ENCODE measurements at regions of chr17 and their contacts with region 1.

Region 1: DNA sequence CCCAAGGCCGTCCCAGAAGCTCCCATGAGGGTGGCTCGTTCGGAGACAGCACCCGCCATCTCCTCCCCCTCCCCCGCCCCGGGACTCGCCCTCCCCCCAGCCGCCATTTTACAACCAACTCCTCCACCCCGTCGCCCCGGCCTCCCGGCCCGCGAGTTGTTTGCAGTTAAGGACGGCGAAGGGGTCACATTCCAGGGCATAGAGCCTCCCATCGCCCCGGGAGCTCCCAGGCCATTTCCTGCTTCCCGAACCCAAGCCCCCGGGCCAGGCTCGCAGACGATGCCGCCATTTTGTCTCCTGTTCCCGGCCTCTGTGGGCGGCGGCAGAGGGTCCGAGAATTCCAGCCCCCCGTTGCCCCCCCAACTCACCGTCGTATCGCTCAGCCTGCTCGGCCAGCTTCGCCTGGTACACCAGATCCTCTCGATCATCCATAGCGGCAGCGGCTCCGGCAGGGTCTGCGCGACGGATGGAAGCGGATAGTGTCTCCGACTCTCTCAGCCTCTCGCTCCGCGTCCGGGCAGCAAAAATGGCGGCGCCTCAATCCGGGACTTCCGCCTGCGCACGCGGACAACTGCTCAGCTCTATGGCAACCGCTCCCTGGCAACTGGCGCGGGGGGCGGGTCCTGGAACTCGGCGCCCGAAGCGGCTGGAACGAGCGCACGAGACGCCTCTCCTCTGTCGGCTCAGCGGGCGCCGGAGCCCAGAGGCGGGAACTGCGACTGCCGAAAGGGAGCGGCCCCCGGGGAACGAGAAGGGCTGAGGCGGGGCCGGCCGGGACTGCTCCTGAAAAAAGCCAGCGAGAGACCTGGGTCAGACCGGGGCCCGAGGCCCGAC is at the start of gene YWHAE:
- DNase-seq: peak; percentile 98
- H3K4me3 ChIP-seq: peak within 1 kb of the TSS; percentile 88 to 99
- H3K27ac ChIP-seq: peak within 1 kb of the TSS; percentile 99 to 100
- H3K4me1 ChIP-seq: peaks cover 28% of the 10 kb centered on the region
- H3K27me3 ChIP-seq: no peaks in the 10 kb centered on the region
- CTCF ChIP-seq: no peak
- POLR2A ChIP-seq: peak; percentile 68
- total RNA-seq, gene YWHAE: 678 to 749 TPM

Region 2: DNA sequence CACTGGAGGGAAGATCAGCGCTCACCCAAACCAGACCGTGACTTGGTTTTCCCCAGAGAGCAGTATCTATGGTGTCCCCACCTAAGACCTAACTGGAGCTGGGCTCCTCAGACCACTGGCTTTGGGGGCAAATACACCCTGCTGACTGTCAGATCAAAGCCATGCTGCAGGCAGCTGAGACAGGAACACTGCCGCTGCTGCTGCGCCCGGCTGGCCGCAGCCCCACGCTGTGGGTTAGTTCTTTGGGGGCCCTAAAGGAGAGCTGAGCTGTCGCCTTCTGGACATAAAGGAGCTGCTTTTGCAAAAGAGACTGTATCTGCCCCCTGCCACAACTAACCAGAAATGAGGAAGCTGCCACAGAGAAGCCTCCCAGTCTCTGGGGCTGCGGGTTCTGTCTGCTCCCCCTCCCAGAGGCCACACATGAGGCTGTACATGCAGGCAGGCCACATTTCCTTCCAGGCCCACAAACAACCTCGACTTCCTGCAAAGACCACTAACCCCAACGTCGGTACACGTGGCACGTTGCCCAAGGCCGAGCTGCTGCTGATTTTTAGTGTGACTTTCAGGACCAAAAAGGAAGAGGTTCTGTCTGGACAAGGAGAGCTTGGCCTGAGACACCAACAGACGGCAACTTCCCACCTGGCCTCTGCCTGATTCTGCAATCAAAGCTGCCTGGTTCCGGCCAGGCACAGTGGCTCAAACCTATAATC is 202.0 kb before region 1 on chr17:
- intact Hi-C with region 1: no loop called
- DNase-seq: peak; percentile 88
- H3K4me3 ChIP-seq: no peak overlapping the region
- H3K27ac ChIP-seq: peak overlapping the region; percentile 55 to 71
- H3K4me1 ChIP-seq: peaks cover 18% of the 10 kb centered on the region
- H3K27me3 ChIP-seq: no peaks in the 10 kb centered on the region
- CTCF ChIP-seq: no peak
- POLR2A ChIP-seq: no peak

Region 3: GRCh38 chr17:1275962-1276736 is 123.7 kb before region 1 on chr17:
- intact Hi-C with region 1: no loop called
- DNase-seq: peak; percentile 75
- H3K4me3 ChIP-seq: no peak overlapping the region
- H3K27ac ChIP-seq: no peak overlapping the region
- H3K4me1 ChIP-seq: no peaks in the 10 kb centered on the region
- H3K27me3 ChIP-seq: no peaks in the 10 kb centered on the region
- CTCF ChIP-seq: peak; percentile 60 to 85 (median 75)
- POLR2A ChIP-seq: no peak

Region 4: GRCh38 chr17:1331708-1332107 is 68.2 kb before region 1 on chr17:
- intact Hi-C with region 1: no loop called
- DNase-seq: no peak
- H3K4me3 ChIP-seq: no peak overlapping the region
- H3K27ac ChIP-seq: no peak overlapping the region
- H3K4me1 ChIP-seq: no peaks in the 10 kb centered on the region
- H3K27me3 ChIP-seq: no peaks in the 10 kb centered on the region
- CTCF ChIP-seq: no peak
- POLR2A ChIP-seq: no peak

Region 5: DNA sequence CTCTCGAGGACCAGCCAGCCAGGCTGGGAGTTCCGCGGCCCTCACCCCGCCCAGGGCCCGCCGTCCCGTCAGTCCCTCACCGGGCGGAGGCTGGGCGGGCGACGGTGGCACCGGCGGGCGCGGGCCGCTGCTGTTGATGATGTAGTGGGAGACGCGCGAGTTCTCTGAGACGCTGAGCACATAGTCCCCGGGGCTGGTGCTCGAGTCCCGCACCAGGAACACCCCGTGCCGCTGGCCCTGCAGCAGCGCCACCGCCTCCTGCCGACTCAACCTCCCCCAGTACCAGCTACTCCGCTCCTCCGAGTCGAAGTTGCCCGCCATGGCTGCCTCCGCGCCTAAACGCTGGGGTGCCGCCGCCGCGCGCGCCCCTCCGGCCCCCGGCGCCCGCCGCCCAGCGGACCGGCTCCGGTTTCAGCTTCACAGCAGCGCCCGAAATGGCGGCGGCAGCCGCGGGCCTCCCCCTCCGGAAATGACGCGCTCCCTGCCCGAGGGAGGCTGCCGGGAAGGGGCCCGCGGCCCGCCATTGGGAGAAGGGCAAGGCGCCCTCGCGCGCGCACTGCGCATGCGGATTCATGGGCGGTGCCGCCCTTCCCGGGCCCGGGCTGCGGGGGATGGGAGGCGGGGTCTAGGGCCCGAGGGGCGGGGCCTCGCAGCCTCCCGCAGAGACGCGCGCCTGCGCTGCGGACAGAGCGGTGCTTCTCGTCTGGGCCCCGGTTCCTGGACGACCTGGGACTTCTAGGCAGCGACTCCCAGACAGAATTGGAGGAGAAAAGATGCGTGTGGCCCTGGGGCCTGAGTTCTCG is 56.1 kb after region 1 on chr17 and contains the start of gene CRK:
- intact Hi-C with region 1: loop called (anchors 10 kb)
- DNase-seq: peak; percentile 97
- H3K4me3 ChIP-seq: peak within 1 kb of the TSS; percentile 94 to 100
- H3K27ac ChIP-seq: peak within 1 kb of the TSS; percentile 90 to 98
- H3K4me1 ChIP-seq: peaks cover 30% of the 10 kb centered on the region
- H3K27me3 ChIP-seq: no peaks in the 10 kb centered on the region
- CTCF ChIP-seq: no peak
- POLR2A ChIP-seq: peak; percentile 62
- total RNA-seq, gene CRK: 68.4 to 79.1 TPM

Measured in testis (tissue), 5 donors.